ENCODE measurements at regions of chr2 and their contacts with region 1.

Region 1: DNA sequence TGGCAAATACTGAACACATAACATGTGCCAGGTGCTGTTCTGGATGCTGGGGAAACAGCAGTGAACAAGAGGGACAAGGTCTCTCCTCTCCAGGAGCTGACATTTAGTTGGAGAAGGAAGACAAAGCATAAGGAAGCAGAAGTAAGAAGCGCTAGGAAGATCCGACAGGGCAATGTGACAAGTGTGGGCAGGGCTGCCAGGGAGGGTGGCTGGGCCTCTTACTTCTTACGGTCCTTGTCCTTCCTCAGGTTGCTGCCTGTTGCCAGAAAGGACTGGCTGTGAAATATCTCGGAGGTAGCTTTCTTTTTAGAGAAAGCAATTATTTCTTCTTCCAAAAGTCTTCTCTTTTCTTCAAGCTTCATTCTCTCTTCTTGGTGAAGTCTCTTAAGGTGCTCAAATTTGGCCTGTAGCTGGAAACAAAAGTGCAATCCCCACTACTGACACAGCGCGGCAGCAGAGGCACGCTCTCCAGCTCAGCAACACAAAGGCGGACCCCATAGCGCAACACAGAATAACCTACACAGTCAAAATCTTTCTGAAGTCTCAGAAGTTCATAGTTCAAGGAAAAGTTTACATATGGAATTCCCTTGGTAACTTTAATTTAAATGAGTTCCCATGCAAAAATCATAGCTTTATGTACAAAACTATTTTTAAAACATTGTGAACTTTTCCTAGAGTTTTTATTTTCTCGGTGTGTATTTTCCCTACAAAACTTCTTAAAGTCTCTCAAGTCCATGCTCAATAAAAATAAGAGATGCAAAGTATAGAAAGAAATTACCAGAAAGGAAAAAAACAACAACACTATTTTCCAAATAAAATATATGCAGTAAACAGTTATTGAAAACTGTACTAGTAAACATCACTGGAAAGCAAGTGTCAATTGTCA is 67.7 kb downstream of the SEPTIN10 start:
- DNase-seq: peak; percentile 76
- ATAC-seq: peak; percentile 74
- H3K4me3 Mint-ChIP-seq: no peak overlapping the region
- H3K27ac Mint-ChIP-seq: no peak overlapping the region
- H3K4me1 Mint-ChIP-seq: no peaks in the 10 kb centered on the region
- H3K27me3 Mint-ChIP-seq: no peaks in the 10 kb centered on the region

Region 2: GRCh38 chr2:108542071-108542470 is 1004.0 kb before region 1 on chr2:
- CTCF ChIA-PET with region 1: no interaction called
- POLR2A ChIA-PET with region 1: no interaction called
- intact Hi-C with region 1: no loop called
- DNase-seq: no peak
- ATAC-seq: no peak
- H3K4me3 Mint-ChIP-seq: no peak overlapping the region
- H3K27ac Mint-ChIP-seq: peak overlapping the region; percentile 10
- H3K4me1 Mint-ChIP-seq: peaks cover 19% of the 10 kb centered on the region
- H3K27me3 Mint-ChIP-seq: no peaks in the 10 kb centered on the region

Region 3: DNA sequence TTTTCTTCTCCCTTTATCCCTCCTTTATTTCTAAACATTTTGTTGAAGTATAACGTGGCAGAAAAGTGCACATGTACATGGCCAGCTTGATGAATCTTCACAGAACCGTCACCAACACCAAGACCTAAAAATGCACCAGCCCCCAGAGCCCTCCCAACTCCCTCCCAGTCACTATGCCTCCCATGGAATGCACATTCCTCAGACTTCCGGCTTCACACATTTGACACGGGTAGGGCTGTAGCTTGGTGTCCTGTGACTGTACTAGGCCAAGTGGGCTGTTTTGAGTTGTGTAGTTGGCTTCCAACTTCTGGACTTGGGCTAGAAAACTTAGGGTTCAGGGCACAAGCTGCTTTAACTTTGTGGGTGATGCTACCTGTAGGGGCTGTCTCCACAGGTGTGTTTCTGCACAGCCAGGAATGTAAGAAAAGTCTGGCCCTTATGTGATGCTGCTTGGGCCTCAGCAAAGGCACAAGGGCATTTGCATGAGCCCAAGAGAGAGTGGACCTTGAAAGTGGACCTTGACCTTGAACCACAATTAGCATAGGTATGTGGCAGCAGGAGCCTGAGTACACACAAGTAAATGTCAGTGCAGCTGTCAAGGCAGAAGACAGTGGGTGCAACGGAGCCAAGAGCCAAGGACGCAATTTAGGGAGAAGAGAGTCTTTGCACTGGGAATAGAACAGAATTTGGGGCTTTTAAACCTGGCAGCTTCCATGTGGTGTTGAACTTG is 10.7 kb before region 1 on chr2:
- CTCF ChIA-PET with region 1: interaction called, 25 read pairs
- POLR2A ChIA-PET with region 1: no interaction called
- intact Hi-C with region 1: no loop called
- DNase-seq: no peak
- ATAC-seq: no peak
- H3K4me3 Mint-ChIP-seq: no peak overlapping the region
- H3K27ac Mint-ChIP-seq: no peak overlapping the region
- H3K4me1 Mint-ChIP-seq: no peaks in the 10 kb centered on the region
- H3K27me3 Mint-ChIP-seq: peaks cover 17% of the 10 kb centered on the region

Region 4: DNA sequence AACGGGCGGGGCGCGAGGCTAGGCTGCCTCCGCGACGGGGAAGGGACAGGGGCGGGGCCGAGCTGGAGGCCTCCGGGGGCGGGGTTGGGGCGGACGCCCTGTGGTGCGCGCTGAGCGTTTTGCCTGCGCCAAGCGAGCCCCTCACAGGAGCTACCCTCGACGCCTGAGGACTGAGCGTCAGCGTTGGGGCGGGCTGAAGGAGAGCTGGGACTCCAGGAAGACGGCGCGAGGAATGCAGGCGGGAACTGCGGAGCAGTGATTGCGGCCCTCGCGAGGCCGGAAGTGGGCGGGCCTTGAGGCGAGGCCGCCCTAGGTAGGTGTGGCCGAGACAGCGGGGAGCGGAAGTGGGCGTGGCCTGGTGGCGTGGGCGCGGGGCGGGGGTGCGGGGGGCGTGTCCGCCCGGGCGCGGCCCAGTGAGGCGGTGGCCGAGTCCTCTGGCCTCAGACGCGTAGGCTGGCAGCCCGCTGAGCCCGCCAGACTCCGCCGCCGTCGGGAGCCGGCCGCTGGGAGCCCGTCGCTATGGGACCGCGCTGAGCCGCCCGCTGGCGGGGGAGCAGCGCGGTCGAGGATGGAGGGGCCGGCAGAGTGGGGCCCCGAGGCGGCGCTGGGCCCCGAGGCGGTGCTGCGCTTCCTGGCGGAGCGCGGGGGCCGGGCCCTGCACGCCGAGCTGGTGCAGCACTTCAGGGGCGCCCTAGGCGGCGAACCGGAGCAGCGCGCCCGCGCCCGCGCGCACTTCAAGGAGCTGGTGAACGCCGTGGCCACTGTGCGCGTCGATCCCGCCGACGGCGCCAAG is 68.0 kb after region 1 on chr2 and contains the starts of genes SEPTIN10 and SOWAHC:
- CTCF ChIA-PET with region 1: interaction called, 3 read pairs
- POLR2A ChIA-PET with region 1: no interaction called
- intact Hi-C with region 1: loop called (anchors 5 kb)
- DNase-seq: peak; percentile 92
- ATAC-seq: peak; percentile 91
- H3K4me3 Mint-ChIP-seq: peak within 1 kb of the TSS; percentile 80
- H3K27ac Mint-ChIP-seq: peak within 1 kb of the TSS; percentile 37
- H3K4me1 Mint-ChIP-seq: peaks cover 16% of the 10 kb centered on the region
- H3K27me3 Mint-ChIP-seq: peaks cover 54% of the 10 kb centered on the region
- total RNA-seq, gene SEPTIN10: 5.8 to 6.3 TPM
- total RNA-seq, gene SOWAHC: 0.63 to 0.98 TPM

Region 5: DNA sequence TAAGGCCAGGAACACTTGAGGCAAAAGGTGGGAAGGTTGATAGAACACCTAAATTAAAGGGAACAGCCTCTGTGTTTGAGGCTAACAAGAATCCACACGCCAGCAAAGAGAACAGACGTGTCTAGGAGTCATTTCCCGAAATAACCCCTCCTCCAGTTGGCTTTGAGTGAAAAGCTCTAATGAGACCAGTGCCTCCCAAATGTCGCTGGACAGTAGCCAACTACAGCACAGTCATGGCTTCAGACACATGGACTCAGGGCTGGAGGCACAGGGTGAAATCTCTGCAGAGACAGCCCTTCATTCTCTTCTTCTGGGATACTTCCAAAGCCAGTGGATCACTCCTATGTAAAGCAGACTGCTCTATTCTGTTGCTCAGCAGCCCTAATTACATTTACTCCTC is 117.7 kb after region 1 on chr2:
- CTCF ChIA-PET with region 1: interaction called, 3 read pairs
- POLR2A ChIA-PET with region 1: no interaction called
- intact Hi-C with region 1: loop called in 1 of 2 experiments (anchors 5 kb)
- DNase-seq: no peak
- ATAC-seq: no peak
- H3K4me3 Mint-ChIP-seq: no peak overlapping the region
- H3K27ac Mint-ChIP-seq: no peak overlapping the region
- H3K4me1 Mint-ChIP-seq: no peaks in the 10 kb centered on the region
- H3K27me3 Mint-ChIP-seq: peaks cover 17% of the 10 kb centered on the region

Region 6: GRCh38 chr2:109736177-109736827 is 190.2 kb after region 1 on chr2:
- CTCF ChIA-PET with region 1: interaction called, 27 read pairs
- POLR2A ChIA-PET with region 1: no interaction called
- intact Hi-C with region 1: loop called in 1 of 2 experiments (anchors 1 kb)
- DNase-seq: peak; percentile 42
- ATAC-seq: no peak
- H3K4me3 Mint-ChIP-seq: no peak overlapping the region
- H3K27ac Mint-ChIP-seq: no peak overlapping the region
- H3K4me1 Mint-ChIP-seq: no peaks in the 10 kb centered on the region
- H3K27me3 Mint-ChIP-seq: peaks cover 12% of the 10 kb centered on the region

Measured in activated CD4-positive, alpha-beta T cell treated with anti-CD3 and anti-CD28 coated beads for 36 hours (primary cell).